Gastrocnemius medialis (tissue), 4 donors: ENCODE measurements at regions of chr2 and their contacts with region 1.

Region 1: GRCh38 chr2:147836099-147836498 is 8.7 kb upstream of the ACVR2A start:
- DNase-seq: no peak
- ATAC-seq: no peak
- H3K4me3 ChIP-seq: no peak overlapping the region
- H3K27ac ChIP-seq: no peak overlapping the region
- H3K4me1 ChIP-seq: no peaks in the 10 kb centered on the region
- H3K27me3 ChIP-seq: no peaks in the 10 kb centered on the region
- CTCF ChIP-seq: no peak
- POLR2A ChIP-seq: no peak

Region 2: GRCh38 chr2:147231607-147232006 is 604.5 kb before region 1 on chr2:
- in situ Hi-C with region 1: no loop called
- intact Hi-C with region 1: loop called (anchors 10 kb)
- DNase-seq: no peak
- ATAC-seq: no peak
- H3K4me3 ChIP-seq: no peak overlapping the region
- H3K27ac ChIP-seq: peak overlapping the region; percentile 27 to 75 (median 64)
- H3K4me1 ChIP-seq: peaks cover 11 to 32% of the 10 kb centered on the region in 2 donors
- H3K27me3 ChIP-seq: no peaks in the 10 kb centered on the region
- CTCF ChIP-seq: no peak
- POLR2A ChIP-seq: no peak

Region 3: DNA sequence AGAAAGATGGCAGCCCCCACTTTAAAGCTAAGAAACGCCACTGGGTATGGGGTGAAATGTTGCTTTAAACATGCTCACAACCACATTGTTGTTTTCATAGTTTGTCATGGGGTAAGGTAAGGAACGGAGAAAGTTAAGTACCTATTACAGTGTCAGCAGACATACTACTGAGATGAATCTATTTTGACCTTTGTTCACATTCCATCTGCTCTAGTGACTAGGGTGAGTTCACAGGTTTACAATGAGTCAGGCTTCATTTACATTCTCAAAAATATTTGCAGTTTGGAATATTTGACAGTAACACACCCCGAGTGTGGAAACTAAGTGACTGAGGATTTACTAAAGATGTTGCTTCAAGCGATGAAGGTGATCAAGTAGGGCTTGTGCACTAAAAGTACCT is 420.0 kb before region 1 on chr2:
- in situ Hi-C with region 1: no loop called
- intact Hi-C with region 1: no loop called
- DNase-seq: no peak
- ATAC-seq: no peak
- H3K4me3 ChIP-seq: no peak overlapping the region
- H3K27ac ChIP-seq: no peak overlapping the region
- H3K4me1 ChIP-seq: no peaks in the 10 kb centered on the region
- H3K27me3 ChIP-seq: no peaks in the 10 kb centered on the region
- CTCF ChIP-seq: no peak
- POLR2A ChIP-seq: no peak

Region 4: DNA sequence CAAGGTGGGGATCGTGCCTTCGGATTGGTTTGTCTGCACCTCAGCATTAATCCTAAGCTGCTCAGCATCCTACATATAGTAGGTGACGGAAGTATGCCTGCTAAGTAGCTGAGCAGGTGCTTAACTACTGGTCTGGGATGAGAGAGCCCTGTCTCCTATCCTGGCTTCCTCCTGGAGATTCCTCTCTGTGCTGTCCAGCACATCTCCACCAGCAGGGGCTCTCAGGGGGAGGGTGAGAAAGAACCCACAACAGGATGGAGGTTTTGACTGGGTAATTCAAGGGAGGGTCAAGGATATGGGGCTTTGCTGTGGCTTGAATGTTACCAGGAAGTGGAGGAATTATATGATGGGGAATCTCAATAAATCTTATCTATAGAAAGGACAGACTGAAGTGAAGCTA is 993.5 kb after region 1 on chr2:
- in situ Hi-C with region 1: no loop called
- intact Hi-C with region 1: no loop called
- DNase-seq: no peak
- ATAC-seq: no peak
- H3K4me3 ChIP-seq: no peak overlapping the region
- H3K27ac ChIP-seq: no peak overlapping the region
- H3K4me1 ChIP-seq: no peaks in the 10 kb centered on the region
- H3K27me3 ChIP-seq: no peaks in the 10 kb centered on the region
- CTCF ChIP-seq: no peak
- POLR2A ChIP-seq: no peak